Activated CD4-positive, alpha-beta T cell treated with anti-CD3 and anti-CD28 coated beads, Interleukin-2, amount 10 ng/mL, durations not matched to agents 7 days and 5 days (primary cell): ENCODE measurements at regions of chr22 and their contacts with region 1.

Region 1: DNA sequence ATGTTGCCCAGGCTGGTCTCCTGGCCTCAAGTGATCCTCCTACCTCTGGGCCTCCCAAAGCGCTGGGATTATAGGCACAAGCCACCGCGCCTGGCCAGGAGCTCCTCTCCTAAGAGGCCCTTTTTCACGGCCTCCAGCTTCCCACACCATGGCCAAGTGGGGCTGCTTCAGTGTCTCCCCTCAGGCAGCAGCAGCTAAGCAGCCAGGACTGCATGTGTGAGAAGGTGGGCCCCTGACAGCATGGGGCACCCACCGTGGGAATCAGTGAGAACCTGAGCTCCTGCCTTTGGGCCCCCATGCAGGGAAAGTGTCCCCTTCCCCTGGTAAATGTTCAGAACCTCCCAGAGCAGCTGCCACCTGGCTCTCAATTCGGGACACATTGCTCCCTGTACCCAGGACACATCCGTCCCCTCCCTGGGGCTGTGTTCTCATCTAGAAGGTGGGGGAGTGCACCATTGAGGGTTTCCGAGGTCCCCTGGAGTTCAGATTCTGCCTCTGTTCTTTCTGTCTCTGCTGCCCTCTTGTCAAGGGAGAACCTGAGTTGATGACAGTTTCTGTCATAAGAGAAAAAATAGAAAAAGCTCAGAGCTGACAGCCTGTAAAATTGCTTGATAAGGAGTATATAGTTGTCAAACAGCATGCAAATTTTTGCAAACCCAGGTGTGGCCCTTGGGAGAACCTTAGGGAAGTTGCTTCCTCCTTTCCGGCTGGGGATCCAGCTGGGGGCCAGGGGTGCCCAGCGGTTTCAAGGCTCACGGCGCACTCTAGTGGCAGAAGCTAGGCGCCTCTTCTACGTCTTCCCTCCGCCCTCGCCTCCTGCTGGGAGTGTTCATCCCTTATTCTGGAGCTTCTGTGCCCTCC is 29.7 kb downstream of the FAM83F start:
- DNase-seq: peak; percentile 68
- H3K4me3 Mint-ChIP-seq: no peak overlapping the region
- H3K27ac Mint-ChIP-seq: no peak overlapping the region
- H3K4me1 Mint-ChIP-seq: peaks cover 5% of the 10 kb centered on the region
- H3K27me3 Mint-ChIP-seq: no peaks in the 10 kb centered on the region

Region 2: GRCh38 chr22:40009292-40009769 is 15.1 kb before region 1 on chr22:
- CTCF ChIA-PET with region 1: interaction called, 14 read pairs
- POLR2A ChIA-PET with region 1: no interaction called
- DNase-seq: no peak
- H3K4me3 Mint-ChIP-seq: no peak overlapping the region
- H3K27ac Mint-ChIP-seq: peak overlapping the region; percentile 75
- H3K4me1 Mint-ChIP-seq: peaks cover 17% of the 10 kb centered on the region
- H3K27me3 Mint-ChIP-seq: peaks cover 33% of the 10 kb centered on the region

Region 3: DNA sequence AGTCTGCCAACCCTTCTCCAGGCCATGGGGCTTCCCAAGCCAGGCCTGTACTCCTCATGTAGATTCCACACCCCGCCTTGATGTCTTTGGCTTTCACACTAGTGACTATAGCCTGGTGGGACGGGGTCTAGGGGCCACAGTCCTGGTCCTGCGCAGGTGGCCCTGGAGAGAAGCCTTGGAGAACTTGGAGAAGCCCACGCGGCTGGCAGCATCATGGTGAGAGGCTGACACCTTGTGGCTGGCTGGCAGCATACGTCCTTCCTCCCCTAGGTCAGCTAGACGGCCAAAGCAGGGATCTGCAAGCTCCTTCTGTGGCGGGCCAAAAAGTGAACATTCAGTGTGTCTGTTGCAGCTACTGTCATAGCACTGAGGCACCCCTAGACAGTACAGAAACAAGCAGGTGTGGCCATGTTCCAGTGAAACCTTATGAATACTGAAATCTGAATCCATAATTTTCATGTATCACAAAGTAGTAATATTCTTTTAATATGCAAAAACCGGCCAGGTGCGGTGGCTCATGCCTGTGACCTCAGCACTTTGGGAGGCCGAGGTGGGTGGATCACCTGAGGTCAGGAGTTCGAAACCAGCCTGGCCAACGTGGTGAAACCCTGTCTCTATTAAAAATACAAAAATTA is 12.3 kb after region 1 on chr22:
- CTCF ChIA-PET with region 1: interaction called, 33 read pairs
- POLR2A ChIA-PET with region 1: no interaction called
- DNase-seq: peak; percentile 59
- H3K4me3 Mint-ChIP-seq: no peak overlapping the region
- H3K27ac Mint-ChIP-seq: no peak overlapping the region
- H3K4me1 Mint-ChIP-seq: peaks cover 7% of the 10 kb centered on the region
- H3K27me3 Mint-ChIP-seq: peaks cover 11% of the 10 kb centered on the region

Region 4: DNA sequence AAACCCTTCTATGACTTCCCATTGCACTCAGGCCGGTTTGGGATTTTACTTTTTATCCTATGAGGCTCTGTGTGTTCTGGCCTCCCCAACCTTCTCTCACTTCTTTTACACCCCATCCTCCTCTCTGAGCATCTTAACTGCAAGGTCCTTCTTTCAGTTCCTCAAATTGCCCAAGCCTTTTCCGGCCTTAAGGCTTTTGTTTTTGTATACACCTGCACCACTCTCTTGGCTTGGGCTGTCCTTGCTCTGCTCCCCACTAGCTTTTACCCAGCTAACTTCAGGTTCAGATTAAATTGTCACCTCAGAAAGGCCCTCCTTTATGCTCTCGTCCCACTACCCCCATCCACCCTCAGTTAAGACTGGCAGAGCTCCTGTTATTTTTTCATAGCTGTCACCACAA is 25.8 kb after region 1 on chr22:
- CTCF ChIA-PET with region 1: no interaction called
- POLR2A ChIA-PET with region 1: no interaction called
- DNase-seq: no peak
- H3K4me3 Mint-ChIP-seq: no peak overlapping the region
- H3K27ac Mint-ChIP-seq: peak overlapping the region; percentile 70
- H3K4me1 Mint-ChIP-seq: peaks cover 60% of the 10 kb centered on the region
- H3K27me3 Mint-ChIP-seq: no peaks in the 10 kb centered on the region